ENCODE measurements at regions of chr18 and their contacts with region 1.

Region 1: DNA sequence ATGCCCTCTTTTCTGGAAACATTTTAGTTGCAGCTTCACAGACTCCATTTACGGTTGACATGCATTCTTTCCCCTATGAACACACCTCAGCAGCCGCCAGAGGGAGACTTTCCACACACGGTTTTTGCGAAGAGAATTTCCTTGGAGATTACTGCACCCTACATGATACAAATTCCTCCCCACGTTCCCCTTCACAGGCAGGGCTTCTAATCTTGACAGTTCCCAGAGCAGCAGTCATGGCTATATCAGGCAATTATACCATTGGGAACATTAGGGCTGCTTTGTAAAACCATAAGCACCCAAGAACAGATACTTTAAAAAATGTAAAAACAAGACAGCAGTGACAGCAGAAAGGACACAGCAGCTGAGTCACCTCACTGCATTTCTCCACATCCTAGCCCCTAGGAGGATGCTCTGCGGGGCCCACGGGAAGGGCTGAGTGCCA is 253.8 kb downstream of the TGIF1 start:
- DNase-seq: peak; percentile 44 to 64
- ATAC-seq: peak; percentile 53 to 91 (median 79)
- H3K4me3 ChIP-seq: peak overlapping the region in 4 of 10 donors; percentile 3 to 26 (median 18)
- H3K27ac ChIP-seq: peak overlapping the region in 4 of 10 donors; percentile 32 to 60 (median 42)
- H3K4me1 ChIP-seq: peaks cover 0 to 25% (median 12%) of the 10 kb centered on the region in 9 donors
- H3K27me3 ChIP-seq: no peaks in the 10 kb centered on the region
- CTCF ChIP-seq: peak; percentile 33 to 76 (median 66)

Region 2: GRCh38 chr18:2564373-2564772 is 1139.4 kb before region 1 on chr18:
- intact Hi-C with region 1: loop called in 1 of 10 experiments (anchors 10 kb)
- DNase-seq: no peak
- ATAC-seq: no peak
- H3K4me3 ChIP-seq: no peak overlapping the region
- H3K27ac ChIP-seq: no peak overlapping the region
- H3K4me1 ChIP-seq: peaks cover 0 to 7% (median under 1%) of the 10 kb centered on the region in 9 donors
- H3K27me3 ChIP-seq: no peaks in the 10 kb centered on the region
- CTCF ChIP-seq: no peak

Region 3: GRCh38 chr18:3869848-3870247 is 166.1 kb after region 1 on chr18:
- intact Hi-C with region 1: loop called in 7 of 10 experiments (anchors 5 to 10 kb)
- DNase-seq: no peak
- ATAC-seq: peak in 5 of 8 donors; percentile 33 to 79 (median 61)
- H3K4me3 ChIP-seq: no peak overlapping the region
- H3K27ac ChIP-seq: no peak overlapping the region
- H3K4me1 ChIP-seq: peaks cover 0 to 26% (median 4%) of the 10 kb centered on the region in 9 donors
- H3K27me3 ChIP-seq: no peaks in the 10 kb centered on the region
- CTCF ChIP-seq: peak; percentile 11 to 64 (median 49)

Region 4: GRCh38 chr18:4004183-4004829 is 300.6 kb after region 1 on chr18:
- intact Hi-C with region 1: loop called (anchors 2 to 10 kb)
- DNase-seq: no peak
- ATAC-seq: no peak
- H3K4me3 ChIP-seq: no peak overlapping the region
- H3K27ac ChIP-seq: no peak overlapping the region
- H3K4me1 ChIP-seq: peaks cover 0 to 11% (median 0%) of the 10 kb centered on the region in 9 donors
- H3K27me3 ChIP-seq: no peaks in the 10 kb centered on the region
- CTCF ChIP-seq: no peak